Activated CD4-positive, alpha-beta T cell treated with anti-CD3 and anti-CD28 coated beads, Interleukin-2, amount 10 ng/mL, durations not matched to agents 24 days and 14 days (primary cell): ENCODE measurements at regions of chr17 and their contacts with region 1.

Region 1: GRCh38 chr17:9575381-9576101 is at the start of gene STX8:
- DNase-seq: peak; percentile 95
- H3K4me3 Mint-ChIP-seq: peak within 1 kb of the TSS; percentile 99
- H3K27ac Mint-ChIP-seq: peak within 1 kb of the TSS; percentile 89
- H3K4me1 Mint-ChIP-seq: peaks cover 14% of the 10 kb centered on the region
- H3K27me3 Mint-ChIP-seq: peaks cover 6% of the 10 kb centered on the region
- total RNA-seq, gene STX8: 41.5 and 45.9 TPM in 2 replicates

Region 2: GRCh38 chr17:9743096-9743495 is 167.6 kb after region 1 on chr17:
- intact Hi-C with region 1: loop called (anchors 10 kb)
- DNase-seq: no peak
- H3K4me3 Mint-ChIP-seq: no peak overlapping the region
- H3K27ac Mint-ChIP-seq: no peak overlapping the region
- H3K4me1 Mint-ChIP-seq: no peaks in the 10 kb centered on the region
- H3K27me3 Mint-ChIP-seq: peaks cover 2% of the 10 kb centered on the region